HepG2 (cell line): ENCODE measurements at regions of chr2 and their contacts with region 1.

Region 1: GRCh38 chr2:139031722-139032121 is 251.5 kb upstream of the NXPH2 start:
- DNase-seq: peak; percentile 35
- ATAC-seq: peak; percentile 98
- H3K4me3 ChIP-seq: no peak overlapping the region
- H3K27ac ChIP-seq: no peak overlapping the region
- H3K4me1 ChIP-seq: no peaks in the 10 kb centered on the region
- H3K27me3 ChIP-seq: no peaks in the 10 kb centered on the region
- CTCF ChIP-seq: peak; percentile 61
- EP300 ChIP-seq: no peak
- POLR2A ChIP-seq: no peak
- RAD21 ChIP-seq: no peak

Region 2: GRCh38 chr2:137865954-137866540 is 1165.7 kb before region 1 on chr2:
- CTCF ChIA-PET with region 1: no interaction called
- POLR2A ChIA-PET with region 1: no interaction called
- in situ Hi-C with region 1: no loop called
- intact Hi-C with region 1: loop called (anchors 5 kb)
- DNase-seq: peak; percentile 77
- ATAC-seq: peak; percentile 98
- H3K4me3 ChIP-seq: no peak overlapping the region
- H3K27ac ChIP-seq: no peak overlapping the region
- H3K4me1 ChIP-seq: no peaks in the 10 kb centered on the region
- H3K27me3 ChIP-seq: no peaks in the 10 kb centered on the region
- CTCF ChIP-seq: peak; percentile 92
- EP300 ChIP-seq: no peak
- POLR2A ChIP-seq: no peak
- RAD21 ChIP-seq: peak; percentile 84

Region 3: GRCh38 chr2:138794734-138795133 is 237.0 kb before region 1 on chr2:
- CTCF ChIA-PET with region 1: no interaction called
- POLR2A ChIA-PET with region 1: no interaction called
- in situ Hi-C with region 1: no loop called
- intact Hi-C with region 1: no loop called
- DNase-seq: no peak
- ATAC-seq: no peak
- H3K4me3 ChIP-seq: no peak overlapping the region
- H3K27ac ChIP-seq: no peak overlapping the region
- H3K4me1 ChIP-seq: no peaks in the 10 kb centered on the region
- H3K27me3 ChIP-seq: no peaks in the 10 kb centered on the region
- CTCF ChIP-seq: no peak
- EP300 ChIP-seq: no peak
- POLR2A ChIP-seq: no peak
- RAD21 ChIP-seq: no peak

Region 4: DNA sequence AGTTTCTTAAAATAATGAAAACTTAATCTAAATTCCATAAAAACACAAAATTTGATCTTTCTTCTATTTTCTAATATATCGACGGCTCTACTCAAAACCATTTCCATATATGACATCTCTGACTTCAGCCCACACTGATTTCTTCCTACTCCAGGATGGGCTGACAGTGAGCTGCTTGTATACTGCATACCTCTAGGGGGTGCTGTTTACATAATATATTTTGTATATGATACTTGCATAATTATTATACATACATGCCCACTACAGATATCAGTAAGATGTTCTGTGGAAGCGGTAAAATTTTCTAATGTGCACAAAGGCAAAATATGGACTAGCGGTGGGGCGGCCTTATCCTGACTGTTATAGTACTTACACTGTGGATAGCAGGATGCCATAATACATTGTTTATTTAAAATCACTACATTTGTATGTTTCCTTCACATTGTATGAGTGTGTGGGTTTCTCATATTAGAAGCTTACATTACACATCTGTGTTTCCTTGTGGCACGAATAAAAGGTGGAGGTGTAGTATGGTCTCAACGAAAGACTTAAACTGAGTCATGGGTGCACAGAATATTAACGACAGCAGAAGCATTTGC is 185.4 kb before region 1 on chr2:
- CTCF ChIA-PET with region 1: interaction called, 5 read pairs
- POLR2A ChIA-PET with region 1: no interaction called
- in situ Hi-C with region 1: loop called (anchors 10 kb)
- intact Hi-C with region 1: loop called (anchors 1 kb)
- DNase-seq: peak; percentile 34
- ATAC-seq: peak; percentile 91
- H3K4me3 ChIP-seq: no peak overlapping the region
- H3K27ac ChIP-seq: no peak overlapping the region
- H3K4me1 ChIP-seq: no peaks in the 10 kb centered on the region
- H3K27me3 ChIP-seq: no peaks in the 10 kb centered on the region
- CTCF ChIP-seq: peak; percentile 73
- EP300 ChIP-seq: no peak
- POLR2A ChIP-seq: no peak
- RAD21 ChIP-seq: peak; percentile 26; the same call in 1 of the 2 replicates

Region 5: GRCh38 chr2:138853296-138853695 is 178.4 kb before region 1 on chr2:
- CTCF ChIA-PET with region 1: no interaction called
- POLR2A ChIA-PET with region 1: no interaction called
- in situ Hi-C with region 1: loop called (anchors 10 kb)
- intact Hi-C with region 1: no loop called
- DNase-seq: no peak
- ATAC-seq: no peak
- H3K4me3 ChIP-seq: no peak overlapping the region
- H3K27ac ChIP-seq: no peak overlapping the region
- H3K4me1 ChIP-seq: no peaks in the 10 kb centered on the region
- H3K27me3 ChIP-seq: no peaks in the 10 kb centered on the region
- CTCF ChIP-seq: no peak
- EP300 ChIP-seq: no peak
- POLR2A ChIP-seq: no peak
- RAD21 ChIP-seq: no peak

Region 6: DNA sequence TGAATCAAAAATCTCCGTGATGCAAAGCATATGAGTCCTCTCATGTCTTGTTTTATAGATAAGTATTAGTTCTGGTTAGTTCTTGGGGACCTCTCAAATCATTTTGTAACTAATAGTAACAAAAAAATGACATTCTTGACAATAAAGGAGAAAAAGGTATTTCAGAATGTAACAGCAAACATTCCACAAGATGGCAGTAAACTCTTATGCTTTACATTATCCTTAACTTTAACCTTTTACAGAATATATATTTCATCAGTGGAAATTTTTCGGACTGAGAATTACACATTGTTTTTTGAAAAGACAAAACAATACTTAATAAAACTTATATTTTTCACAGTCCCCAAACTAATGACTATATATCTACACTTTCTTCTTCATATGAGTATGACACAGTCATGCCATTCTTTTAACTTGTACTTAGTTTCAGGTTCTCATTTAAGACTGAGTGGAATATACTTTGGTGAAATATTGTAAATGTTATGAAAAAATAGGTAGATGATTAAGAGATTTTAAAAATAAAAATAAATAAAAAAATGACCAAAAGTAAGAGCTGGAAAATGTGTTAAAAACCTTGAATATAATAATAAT is 108.7 kb before region 1 on chr2:
- CTCF ChIA-PET with region 1: interaction called, 16 read pairs
- POLR2A ChIA-PET with region 1: no interaction called
- in situ Hi-C with region 1: loop called (anchors 5 kb)
- intact Hi-C with region 1: loop called (anchors 1 kb)
- DNase-seq: peak; percentile 40
- ATAC-seq: peak; percentile 36; the same call in 2 of the 3 replicates
- H3K4me3 ChIP-seq: no peak overlapping the region
- H3K27ac ChIP-seq: no peak overlapping the region
- H3K4me1 ChIP-seq: no peaks in the 10 kb centered on the region
- H3K27me3 ChIP-seq: no peaks in the 10 kb centered on the region
- CTCF ChIP-seq: peak; percentile 59
- EP300 ChIP-seq: no peak
- POLR2A ChIP-seq: no peak
- RAD21 ChIP-seq: no peak

Region 7: GRCh38 chr2:138928374-138929021 is 103.2 kb before region 1 on chr2:
- CTCF ChIA-PET with region 1: interaction called, 16 read pairs
- POLR2A ChIA-PET with region 1: no interaction called
- in situ Hi-C with region 1: loop called (anchors 5 kb)
- intact Hi-C with region 1: loop called (anchors 1 kb)
- DNase-seq: no peak
- ATAC-seq: no peak
- H3K4me3 ChIP-seq: no peak overlapping the region
- H3K27ac ChIP-seq: no peak overlapping the region
- H3K4me1 ChIP-seq: no peaks in the 10 kb centered on the region
- H3K27me3 ChIP-seq: no peaks in the 10 kb centered on the region
- CTCF ChIP-seq: no peak
- EP300 ChIP-seq: no peak
- POLR2A ChIP-seq: no peak
- RAD21 ChIP-seq: no peak

Region 8: DNA sequence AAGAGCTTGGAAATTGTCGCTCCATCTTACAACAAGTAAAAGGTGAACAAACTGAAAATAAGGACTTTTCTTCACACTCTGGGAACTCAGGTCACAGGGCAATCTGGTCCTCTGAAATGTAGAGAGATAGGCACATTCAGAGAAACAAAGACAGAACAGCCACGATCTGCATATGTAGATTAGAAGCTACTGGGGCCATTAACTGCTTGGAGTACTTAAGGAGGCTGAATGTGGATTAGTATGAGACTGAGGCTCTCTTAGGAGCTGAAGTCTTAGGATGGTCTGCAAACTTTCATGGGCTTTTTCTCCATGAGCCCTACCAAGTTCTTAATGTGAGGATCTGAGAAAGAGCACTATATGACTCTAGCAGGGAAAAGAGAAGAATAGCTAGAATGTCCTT is 13.8 kb after region 1 on chr2:
- CTCF ChIA-PET with region 1: no interaction called
- POLR2A ChIA-PET with region 1: no interaction called
- in situ Hi-C with region 1: no loop called
- intact Hi-C with region 1: no loop called
- DNase-seq: no peak
- ATAC-seq: no peak
- H3K4me3 ChIP-seq: no peak overlapping the region
- H3K27ac ChIP-seq: no peak overlapping the region
- H3K4me1 ChIP-seq: no peaks in the 10 kb centered on the region
- H3K27me3 ChIP-seq: no peaks in the 10 kb centered on the region
- CTCF ChIP-seq: no peak
- EP300 ChIP-seq: no peak
- POLR2A ChIP-seq: no peak
- RAD21 ChIP-seq: no peak